Activated CD8-positive, alpha-beta T cell treated with anti-CD3 and anti-CD28 coated beads for 36 hours (primary cell): ENCODE measurements at regions of chr6 and their contacts with region 1.

Region 1: GRCh38 chr6:137944793-137945498 is 77.9 kb downstream of the TNFAIP3 start:
- DNase-seq: no peak
- ATAC-seq: peak; percentile 31
- H3K4me3 Mint-ChIP-seq: no peak overlapping the region
- H3K27ac Mint-ChIP-seq: peak overlapping the region; percentile 4
- H3K4me1 Mint-ChIP-seq: peaks cover 53% of the 10 kb centered on the region
- H3K27me3 Mint-ChIP-seq: no peaks in the 10 kb centered on the region
- CTCF ChIP-seq: peak; percentile 79

Region 2: DNA sequence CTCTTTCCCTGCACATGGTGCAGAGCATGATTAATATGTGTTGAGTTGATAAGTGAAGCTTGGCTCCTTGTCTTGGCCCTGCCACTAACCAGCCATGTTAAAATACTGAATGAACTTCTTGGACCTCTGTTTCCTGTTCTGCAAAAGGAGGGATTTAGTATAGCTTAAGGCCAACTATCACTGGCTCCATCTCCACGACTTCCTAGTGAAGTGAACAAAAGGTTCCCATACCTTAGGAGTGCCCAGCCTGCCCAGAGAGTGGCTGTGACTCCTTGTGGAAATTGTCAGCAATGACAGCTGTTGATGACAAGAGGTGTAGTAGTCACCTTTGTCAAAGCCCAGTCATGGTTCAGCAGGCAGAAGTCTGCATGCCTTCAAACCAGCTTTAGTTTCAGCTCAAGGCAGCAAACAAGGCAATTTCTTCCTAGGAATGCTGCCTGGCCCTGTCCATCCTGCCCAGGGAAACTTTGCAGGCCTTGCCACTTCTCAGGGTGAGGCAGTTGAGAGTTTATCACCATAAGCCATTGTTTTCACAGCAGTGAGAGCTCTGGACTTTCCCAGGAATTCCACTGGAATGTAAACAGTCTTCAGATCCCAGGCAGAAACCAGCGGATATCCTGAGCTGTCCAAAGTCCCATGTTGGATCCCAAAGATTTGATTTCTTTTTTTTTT is 247.5 kb before region 1 on chr6:
- CTCF ChIA-PET with region 1: interaction called, 13 read pairs
- POLR2A ChIA-PET with region 1: no interaction called
- intact Hi-C with region 1: no loop called
- DNase-seq: no peak
- ATAC-seq: peak; percentile 29
- H3K4me3 Mint-ChIP-seq: no peak overlapping the region
- H3K27ac Mint-ChIP-seq: peak overlapping the region; percentile 55
- H3K4me1 Mint-ChIP-seq: peaks cover 43% of the 10 kb centered on the region
- H3K27me3 Mint-ChIP-seq: peaks cover 8% of the 10 kb centered on the region
- CTCF ChIP-seq: no peak

Region 3: GRCh38 chr6:137878486-137879285 is 66.3 kb before region 1 on chr6:
- CTCF ChIA-PET with region 1: interaction called, 360 read pairs
- POLR2A ChIA-PET with region 1: interaction called, 6 read pairs
- intact Hi-C with region 1: loop called (anchors 2 kb)
- DNase-seq: no peak
- ATAC-seq: no peak
- H3K4me3 Mint-ChIP-seq: peak overlapping the region; percentile 98
- H3K27ac Mint-ChIP-seq: peak overlapping the region; percentile 95
- H3K4me1 Mint-ChIP-seq: peaks cover 90% of the 10 kb centered on the region
- H3K27me3 Mint-ChIP-seq: no peaks in the 10 kb centered on the region
- CTCF ChIP-seq: no peak

Region 4: DNA sequence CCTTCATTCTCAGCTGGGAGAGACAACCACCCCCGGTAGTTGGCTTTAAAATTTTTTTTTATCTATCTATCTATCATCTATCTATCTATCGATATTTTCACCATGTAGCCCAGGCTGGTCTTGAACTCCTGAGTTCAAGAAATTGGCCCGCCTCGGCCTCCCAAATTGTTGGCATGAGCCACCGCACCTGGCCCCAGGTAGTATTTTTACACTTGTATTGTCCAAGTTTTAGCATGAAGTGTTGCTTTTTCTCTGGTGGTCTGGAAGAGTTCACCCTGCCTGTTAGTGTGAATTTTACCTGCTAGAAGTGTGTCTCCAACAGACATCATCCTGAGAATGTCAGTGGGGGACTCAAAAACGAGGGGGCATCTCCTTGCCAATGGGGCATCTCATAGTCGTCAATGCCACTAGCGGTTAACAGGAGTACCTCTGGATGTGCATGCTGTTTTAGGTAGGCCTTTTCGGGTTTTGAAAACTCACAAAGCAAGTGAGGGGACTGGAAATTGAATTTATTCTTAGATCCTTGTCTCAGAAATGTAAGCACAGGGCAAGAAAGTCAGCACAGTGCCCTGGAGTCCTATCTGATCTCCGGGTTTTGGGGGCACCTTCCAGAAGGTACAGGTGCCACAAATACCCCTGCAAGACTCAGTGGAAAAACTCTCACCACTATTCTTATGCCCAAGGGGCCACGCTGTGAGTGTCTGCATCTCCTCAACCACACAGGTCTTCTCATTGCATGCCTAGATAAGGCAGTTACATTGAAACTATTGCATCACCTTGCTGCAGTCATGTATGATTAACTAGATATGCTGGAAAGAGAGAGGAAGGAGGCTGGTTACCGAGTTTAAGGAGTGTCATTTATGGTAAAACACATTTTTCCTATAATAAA is 40.8 kb before region 1 on chr6:
- CTCF ChIA-PET with region 1: interaction called, 8 read pairs
- POLR2A ChIA-PET with region 1: interaction called, 3 read pairs
- intact Hi-C with region 1: loop called (anchors 5 kb)
- DNase-seq: peak; percentile 78
- ATAC-seq: peak; percentile 67
- H3K4me3 Mint-ChIP-seq: peak overlapping the region; percentile 67
- H3K27ac Mint-ChIP-seq: peak overlapping the region; percentile 99
- H3K4me1 Mint-ChIP-seq: peaks cover 57% of the 10 kb centered on the region
- H3K27me3 Mint-ChIP-seq: no peaks in the 10 kb centered on the region
- CTCF ChIP-seq: no peak

Region 5: DNA sequence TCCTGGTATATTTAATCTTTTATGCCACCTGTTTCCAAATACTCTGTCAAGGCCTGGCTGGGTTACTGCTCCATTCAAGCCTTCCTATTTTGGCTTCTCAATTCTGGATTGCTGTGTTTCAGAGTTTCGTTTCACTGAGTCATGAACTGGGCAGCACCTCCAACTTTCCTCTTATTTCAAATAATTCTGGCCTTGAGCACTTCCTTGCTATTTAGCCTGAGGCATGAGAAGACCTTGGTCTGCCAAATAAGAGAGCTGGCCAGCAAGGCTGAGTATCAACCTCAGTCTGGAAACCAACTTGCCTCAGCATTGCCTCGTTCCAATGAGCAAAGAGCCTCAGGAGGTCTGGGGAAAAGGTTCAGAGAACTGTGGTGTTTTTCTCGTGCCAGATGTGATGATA is 11.2 kb before region 1 on chr6:
- CTCF ChIA-PET with region 1: interaction called, 25 read pairs
- POLR2A ChIA-PET with region 1: interaction called, 9 read pairs
- intact Hi-C with region 1: no loop called
- DNase-seq: no peak
- ATAC-seq: no peak
- H3K4me3 Mint-ChIP-seq: no peak overlapping the region
- H3K27ac Mint-ChIP-seq: peak overlapping the region; percentile 49
- H3K4me1 Mint-ChIP-seq: peaks cover 45% of the 10 kb centered on the region
- H3K27me3 Mint-ChIP-seq: no peaks in the 10 kb centered on the region
- CTCF ChIP-seq: no peak

Region 6: DNA sequence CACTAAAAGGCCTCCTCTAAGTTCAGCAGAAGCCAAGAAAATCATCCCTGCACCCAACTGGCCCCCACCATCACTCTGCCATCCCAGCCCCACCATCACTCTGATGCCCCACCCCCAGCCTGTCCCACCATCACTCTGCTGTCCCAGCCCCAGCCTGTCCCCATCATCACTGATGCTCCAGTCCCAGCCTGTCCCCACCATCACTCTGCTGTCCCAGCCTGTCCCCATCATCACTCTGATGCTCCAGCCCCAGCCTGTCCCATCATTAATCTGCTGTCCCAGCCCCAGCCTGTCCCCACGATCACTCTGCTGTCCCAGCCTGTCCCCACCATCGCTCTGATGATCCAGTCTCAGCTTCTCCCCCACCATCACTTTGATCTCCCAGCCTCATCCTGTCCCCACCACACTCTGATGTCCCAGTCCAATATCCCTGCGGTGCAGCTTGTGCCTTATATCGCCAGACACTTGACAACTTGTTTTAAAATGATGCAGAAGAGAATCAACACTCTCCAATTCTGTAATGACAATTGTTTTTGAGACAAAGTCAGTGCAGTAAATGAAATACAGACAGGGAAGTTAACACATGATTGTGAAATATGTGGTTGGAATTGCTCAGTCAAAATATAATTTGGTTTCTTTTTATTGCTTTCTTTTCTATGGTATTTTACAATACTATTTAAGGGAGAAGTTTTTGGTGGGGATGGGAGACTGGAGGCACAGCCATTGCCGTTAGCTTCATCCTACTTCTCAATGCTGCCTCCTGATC is 22.9 kb after region 1 on chr6:
- CTCF ChIA-PET with region 1: interaction called, 18 read pairs
- POLR2A ChIA-PET with region 1: interaction called, 3 read pairs
- intact Hi-C with region 1: no loop called
- DNase-seq: no peak
- ATAC-seq: no peak
- H3K4me3 Mint-ChIP-seq: no peak overlapping the region
- H3K27ac Mint-ChIP-seq: peak overlapping the region; percentile 92
- H3K4me1 Mint-ChIP-seq: peaks cover 56% of the 10 kb centered on the region
- H3K27me3 Mint-ChIP-seq: no peaks in the 10 kb centered on the region
- CTCF ChIP-seq: no peak

Region 7: GRCh38 chr6:137975188-137975940 is 30.4 kb after region 1 on chr6:
- CTCF ChIA-PET with region 1: interaction called, 21 read pairs
- POLR2A ChIA-PET with region 1: interaction called, 7 read pairs
- intact Hi-C with region 1: loop called (anchors 2 kb)
- DNase-seq: peak; percentile 64
- ATAC-seq: peak; percentile 69
- H3K4me3 Mint-ChIP-seq: peak overlapping the region; percentile 70
- H3K27ac Mint-ChIP-seq: peak overlapping the region; percentile 94
- H3K4me1 Mint-ChIP-seq: peaks cover 70% of the 10 kb centered on the region
- H3K27me3 Mint-ChIP-seq: no peaks in the 10 kb centered on the region
- CTCF ChIP-seq: peak; percentile 82

Region 8: DNA sequence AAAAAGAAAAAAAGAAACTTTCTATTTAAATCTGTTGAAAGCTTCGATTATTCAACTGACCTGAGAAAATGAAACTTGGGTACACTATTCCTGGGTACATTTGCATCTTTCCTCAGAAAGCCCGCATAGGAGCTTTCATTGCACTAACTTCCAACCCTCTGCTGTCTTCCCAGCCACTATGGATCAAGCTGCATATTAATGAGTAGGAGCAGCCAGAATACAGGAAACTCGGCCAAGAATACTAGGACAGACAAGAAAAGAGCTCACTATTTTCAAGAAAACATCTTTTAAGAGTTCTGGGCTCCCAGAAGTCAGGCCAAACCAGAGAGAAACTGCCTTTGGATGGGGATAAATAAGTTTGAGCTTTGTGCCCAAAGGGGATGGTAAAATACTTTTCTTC is 693.7 kb after region 1 on chr6:
- CTCF ChIA-PET with region 1: no interaction called
- POLR2A ChIA-PET with region 1: no interaction called
- intact Hi-C with region 1: no loop called
- DNase-seq: no peak
- ATAC-seq: no peak
- H3K4me3 Mint-ChIP-seq: no peak overlapping the region
- H3K27ac Mint-ChIP-seq: no peak overlapping the region
- H3K4me1 Mint-ChIP-seq: no peaks in the 10 kb centered on the region
- H3K27me3 Mint-ChIP-seq: peaks cover 2% of the 10 kb centered on the region
- CTCF ChIP-seq: no peak